ENCODE measurements at regions of chr7 and their contacts with region 1.

Region 1: DNA sequence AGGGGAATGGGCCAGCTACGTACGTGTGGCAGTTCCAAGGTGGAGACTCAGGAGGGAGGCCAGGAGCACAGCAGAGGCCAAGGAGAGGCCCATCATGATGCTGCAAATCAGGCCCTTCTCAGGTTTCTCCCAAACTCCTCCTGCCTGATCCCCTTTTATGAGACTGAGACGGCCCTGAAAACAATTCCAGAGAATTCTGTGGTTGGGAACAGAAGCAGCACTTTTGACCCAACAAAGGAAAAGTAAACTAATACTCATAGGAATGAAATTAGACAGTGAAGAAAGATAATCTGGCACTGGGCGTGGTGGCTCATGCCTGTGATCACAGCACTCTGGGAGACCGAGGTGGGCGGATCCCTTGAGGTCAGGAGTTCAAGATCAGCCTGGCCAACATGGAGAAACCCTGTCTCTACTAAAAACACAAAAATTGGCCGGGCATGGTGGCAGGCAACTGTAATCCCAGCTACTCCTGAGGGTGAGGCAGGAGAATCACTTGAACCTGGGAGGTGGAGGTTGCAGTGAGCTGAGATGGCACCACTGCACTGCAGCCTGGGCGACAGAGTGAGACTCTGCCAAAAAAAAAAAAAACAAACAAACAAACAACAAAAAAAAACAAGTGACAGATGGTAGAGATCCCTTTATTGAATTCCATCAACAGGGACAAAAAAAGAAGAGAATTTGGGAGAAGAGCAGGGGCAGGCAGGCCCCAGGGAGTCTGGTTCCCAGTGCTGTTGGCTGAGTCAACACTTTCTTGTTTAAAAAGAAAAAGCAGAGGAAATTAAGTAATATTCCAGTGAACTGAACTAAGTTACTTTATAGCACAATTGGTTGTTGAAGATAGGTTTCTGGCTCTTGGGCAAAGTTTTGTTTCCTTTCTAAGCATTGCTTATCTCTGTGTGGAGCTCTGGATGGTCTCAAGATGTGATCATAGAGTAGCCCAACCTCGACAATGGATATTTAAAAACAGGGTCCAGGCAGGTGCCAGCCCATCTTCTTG is at the start of gene CCL26:
- DNase-seq: no peak
- total RNA-seq, gene CCL26: 0.83 TPM

Region 2: DNA sequence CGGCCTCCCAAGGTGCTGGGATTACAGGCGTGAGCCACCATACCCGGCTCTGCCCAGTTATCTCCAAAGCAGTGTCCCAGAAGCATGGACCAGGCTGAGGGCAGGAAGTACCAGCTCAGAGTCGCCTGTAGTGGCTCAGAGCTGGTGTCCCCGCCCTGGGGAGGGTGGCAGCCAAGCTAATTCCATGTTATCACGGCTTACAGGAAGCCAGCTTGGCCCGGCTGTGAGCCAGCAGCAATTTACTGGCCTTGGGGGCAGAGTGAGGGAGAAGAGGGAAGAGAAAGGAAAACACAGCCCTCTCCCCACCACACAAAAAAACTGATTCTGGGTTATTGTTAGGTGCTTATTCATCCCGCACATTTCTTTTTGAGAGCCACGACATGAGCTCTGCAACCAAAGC is 121.7 kb before region 1 on chr7:
- intact Hi-C with region 1: no loop called
- DNase-seq: peak; percentile 84

Region 3: DNA sequence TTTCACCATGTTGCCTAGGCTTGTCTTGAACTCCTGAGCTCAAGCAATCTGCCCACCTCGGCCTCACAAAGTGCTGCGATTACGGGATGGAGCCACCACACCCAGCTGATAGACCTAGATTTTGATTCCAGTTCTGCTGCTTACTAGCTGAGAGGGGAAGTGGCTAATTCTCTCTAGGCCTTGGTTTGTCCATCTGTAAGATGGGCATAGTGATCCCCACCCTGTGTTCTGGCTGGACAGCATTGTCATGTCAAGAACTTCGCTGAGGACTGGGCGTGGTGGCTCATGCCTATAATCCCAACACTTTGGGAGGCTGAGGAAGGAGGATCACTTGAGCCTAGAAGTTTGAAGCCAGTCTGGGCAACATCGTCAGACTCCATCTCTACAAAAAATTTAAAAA is 58.6 kb after region 1 on chr7:
- intact Hi-C with region 1: no loop called
- DNase-seq: no peak

Region 4: DNA sequence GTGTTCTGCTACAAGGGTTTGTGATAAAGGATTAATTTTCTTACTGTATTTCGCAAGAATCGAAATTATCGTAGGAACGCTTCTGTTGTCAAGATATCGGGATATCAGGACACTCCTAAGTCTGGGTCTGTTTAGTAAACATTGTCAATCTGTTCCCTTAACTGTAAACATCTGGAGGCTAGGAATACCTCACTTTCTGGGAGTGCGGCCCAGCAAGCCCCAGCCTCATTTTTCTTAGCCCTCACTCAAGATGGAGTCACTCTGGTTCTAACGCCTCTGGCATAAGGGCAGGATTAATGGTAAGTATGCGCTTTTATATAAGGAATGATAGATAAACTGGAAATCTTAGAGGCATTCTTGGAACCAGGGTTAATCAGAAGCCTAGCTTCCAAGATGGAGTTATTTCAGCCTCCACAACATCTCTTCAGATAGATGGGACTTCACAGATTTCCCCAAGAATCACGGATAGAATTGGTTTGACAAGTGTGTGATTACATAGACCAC is 71.3 kb after region 1 on chr7:
- intact Hi-C with region 1: loop called (anchors 2 kb)
- DNase-seq: no peak

Region 5: DNA sequence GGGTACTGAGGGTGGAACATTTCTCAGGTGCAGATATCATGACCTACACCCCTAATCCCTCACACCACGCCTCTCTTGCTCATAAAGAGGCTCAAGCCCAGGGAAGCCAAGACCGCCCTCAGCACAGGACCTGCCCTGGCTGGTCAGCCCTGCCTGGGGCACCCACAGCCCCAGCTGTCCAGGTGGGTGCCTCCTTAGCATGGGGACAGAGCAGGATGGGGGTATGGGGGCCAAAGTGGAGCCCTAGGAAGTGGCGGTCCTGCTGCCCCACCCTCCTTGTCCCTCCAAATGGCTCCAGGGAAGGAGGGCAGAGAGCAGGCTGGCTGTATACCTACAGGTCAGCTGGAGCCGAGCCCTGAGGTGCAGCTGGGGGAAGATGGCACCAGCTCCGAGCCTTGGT is 126.7 kb after region 1 on chr7:
- intact Hi-C with region 1: no loop called
- DNase-seq: no peak